ENCODE measurements at regions of chr1 and their contacts with region 1.

Region 1: GRCh38 chr1:115179397-115179835 is 90.1 kb upstream of the TSPAN2 start:
- DNase-seq: peak; percentile 83
- H3K4me3 ChIP-seq: no peak overlapping the region
- CTCF ChIP-seq: no peak

Region 2: GRCh38 chr1:115166531-115167091 is 12.8 kb before region 1 on chr1:
- CTCF ChIA-PET with region 1: no interaction called
- POLR2A ChIA-PET with region 1: interaction called, 13 read pairs
- DNase-seq: peak; percentile 70
- H3K4me3 ChIP-seq: no peak overlapping the region
- CTCF ChIP-seq: no peak

Region 3: DNA sequence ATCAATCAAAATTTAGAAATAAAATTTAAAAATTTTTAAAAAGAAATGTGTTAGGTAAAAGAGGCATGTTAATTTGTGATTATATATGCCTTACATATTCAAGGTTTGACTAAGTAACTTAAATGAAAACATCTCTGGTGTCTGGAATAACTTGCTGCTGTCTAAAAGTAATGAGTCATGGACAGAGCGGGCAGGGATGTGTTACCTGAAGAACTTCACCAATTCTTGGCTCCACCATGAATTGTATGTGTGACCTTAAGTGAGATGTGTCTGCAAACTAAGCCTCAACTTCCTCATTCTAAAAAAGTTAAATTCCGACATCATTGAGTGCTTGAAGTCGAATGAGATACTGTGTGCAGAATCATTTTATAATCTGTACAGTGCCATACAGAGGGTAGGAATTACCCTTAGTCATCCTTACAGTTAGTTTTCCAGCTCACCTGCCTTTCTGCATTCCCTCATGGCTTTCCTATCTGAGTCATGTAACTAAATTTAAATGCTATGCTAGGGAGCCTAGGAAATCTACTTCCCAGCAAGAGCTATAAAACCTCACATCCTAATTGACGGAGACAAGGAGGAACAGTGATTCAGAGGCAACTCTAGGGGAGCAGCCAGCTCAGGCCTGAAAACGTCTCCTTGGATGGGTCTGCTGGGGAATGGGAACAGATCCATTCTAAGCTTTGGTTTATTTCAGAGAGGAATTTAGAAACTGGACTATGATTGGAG is 10.6 kb after region 1 on chr1:
- CTCF ChIA-PET with region 1: interaction called, 3 read pairs
- POLR2A ChIA-PET with region 1: interaction called, 12 read pairs
- DNase-seq: peak; percentile 94
- H3K4me3 ChIP-seq: no peak overlapping the region
- CTCF ChIP-seq: no peak

Region 4: DNA sequence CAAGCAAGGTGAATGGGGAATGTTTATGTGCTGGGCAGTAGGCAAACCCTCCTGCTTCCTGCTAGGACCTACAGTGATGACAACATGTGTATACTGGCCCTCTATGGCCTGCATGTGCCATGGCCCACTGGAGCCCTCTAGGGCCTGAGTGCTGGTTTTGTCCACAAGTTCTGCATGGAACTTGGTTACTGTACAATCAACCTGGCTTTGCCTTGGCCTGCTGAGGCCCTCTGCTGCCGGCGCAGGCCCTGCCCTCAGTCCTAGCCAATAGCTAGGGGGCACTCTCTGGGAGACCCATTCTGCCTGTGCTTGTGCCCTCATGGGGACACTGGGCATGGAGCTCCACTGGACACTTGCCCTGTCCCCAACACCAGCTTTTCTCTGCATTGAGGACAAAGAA is 297.2 kb after region 1 on chr1:
- CTCF ChIA-PET with region 1: no interaction called
- POLR2A ChIA-PET with region 1: no interaction called
- DNase-seq: no peak
- H3K4me3 ChIP-seq: no peak overlapping the region
- CTCF ChIP-seq: peak; percentile 27